Mucosa of descending colon (tissue), 3 donors: ENCODE measurements at regions of chr1 and their contacts with region 1.

Region 1: GRCh38 chr1:168572633-168573032 is 3.8 kb upstream of the XCL1 start:
- DNase-seq: no peak
- ATAC-seq: no peak
- H3K4me3 ChIP-seq: no peak overlapping the region
- H3K4me1 ChIP-seq: no peaks in the 10 kb centered on the region
- CTCF ChIP-seq: no peak

Region 2: GRCh38 chr1:168342572-168343280 is 229.9 kb before region 1 on chr1:
- intact Hi-C with region 1: loop called in 1 of 2 experiments (anchors 10 kb)
- DNase-seq: peak; percentile 86 to 90 (median 88)
- ATAC-seq: peak; percentile 99
- H3K4me3 ChIP-seq: no peak overlapping the region
- H3K4me1 ChIP-seq: peaks cover 6% of the 10 kb centered on the region
- CTCF ChIP-seq: peak; percentile 85

Region 3: DNA sequence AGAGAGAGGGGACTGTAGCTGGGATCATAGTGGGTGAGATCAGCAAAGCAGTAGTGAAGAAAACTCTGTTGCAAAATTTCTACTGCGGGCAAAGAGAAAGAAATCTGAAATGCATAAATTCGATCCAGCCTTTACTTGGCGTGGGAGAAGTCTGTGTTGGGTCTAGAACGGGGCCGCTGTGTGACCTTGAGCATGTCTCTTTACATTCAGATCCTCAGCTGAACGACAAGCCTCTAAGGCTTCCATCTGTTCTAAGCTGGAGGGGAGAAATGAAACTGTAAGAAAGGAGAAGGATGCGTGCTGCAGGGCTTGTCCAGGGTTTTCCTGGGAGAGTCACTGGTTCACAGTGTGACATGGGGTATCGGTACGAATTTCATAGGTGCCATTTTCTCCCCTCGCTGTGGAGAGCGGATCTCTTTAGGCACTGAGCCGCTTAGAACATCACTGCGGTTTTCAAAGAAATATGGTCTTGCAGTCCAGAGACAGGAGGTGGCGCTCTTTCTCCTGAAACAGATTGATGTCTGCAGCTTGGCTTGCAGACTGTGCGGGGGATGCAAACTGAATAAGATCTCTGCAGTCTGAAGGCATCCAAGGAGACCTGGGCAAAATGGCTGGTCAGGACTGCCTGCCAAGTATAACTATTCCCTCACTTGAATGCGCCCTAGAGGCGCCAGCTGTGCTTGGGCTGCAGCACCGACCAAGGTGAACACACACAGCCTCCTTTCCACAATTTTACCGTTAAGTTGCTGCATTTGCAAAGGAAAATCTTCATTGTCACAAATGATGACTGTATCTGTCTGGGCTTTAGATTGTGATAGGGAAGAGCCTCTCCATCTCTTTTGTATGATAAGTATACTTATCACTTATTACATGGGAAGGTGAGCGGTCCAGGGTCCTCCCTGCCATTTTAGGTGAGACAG is 132.9 kb before region 1 on chr1:
- intact Hi-C with region 1: loop called in 1 of 2 experiments (anchors 5 kb)
- DNase-seq: peak in 2 of 3 donors; percentile 53 to 91
- ATAC-seq: peak; percentile 87
- H3K4me3 ChIP-seq: no peak overlapping the region
- H3K4me1 ChIP-seq: no peaks in the 10 kb centered on the region
- CTCF ChIP-seq: no peak

Region 4: GRCh38 chr1:168623003-168623828 is 50.6 kb after region 1 on chr1:
- intact Hi-C with region 1: no loop called
- DNase-seq: no peak
- ATAC-seq: peak; percentile 65
- H3K4me3 ChIP-seq: no peak overlapping the region
- H3K4me1 ChIP-seq: no peaks in the 10 kb centered on the region
- CTCF ChIP-seq: no peak